PC-9 (cell line): ENCODE measurements at regions of chr1 and their contacts with region 1.

Region 1: GRCh38 chr1:225508538-225509375 is 80.9 kb upstream of the LBR start:
- DNase-seq: peak; percentile 65 to 98
- H3K4me3 ChIP-seq: no peak overlapping the region
- H3K27ac ChIP-seq: peak overlapping the region; percentile 93
- H3K4me1 ChIP-seq: peaks cover 36% of the 10 kb centered on the region
- H3K27me3 ChIP-seq: no peaks in the 10 kb centered on the region
- CTCF ChIP-seq: no peak

Region 2: DNA sequence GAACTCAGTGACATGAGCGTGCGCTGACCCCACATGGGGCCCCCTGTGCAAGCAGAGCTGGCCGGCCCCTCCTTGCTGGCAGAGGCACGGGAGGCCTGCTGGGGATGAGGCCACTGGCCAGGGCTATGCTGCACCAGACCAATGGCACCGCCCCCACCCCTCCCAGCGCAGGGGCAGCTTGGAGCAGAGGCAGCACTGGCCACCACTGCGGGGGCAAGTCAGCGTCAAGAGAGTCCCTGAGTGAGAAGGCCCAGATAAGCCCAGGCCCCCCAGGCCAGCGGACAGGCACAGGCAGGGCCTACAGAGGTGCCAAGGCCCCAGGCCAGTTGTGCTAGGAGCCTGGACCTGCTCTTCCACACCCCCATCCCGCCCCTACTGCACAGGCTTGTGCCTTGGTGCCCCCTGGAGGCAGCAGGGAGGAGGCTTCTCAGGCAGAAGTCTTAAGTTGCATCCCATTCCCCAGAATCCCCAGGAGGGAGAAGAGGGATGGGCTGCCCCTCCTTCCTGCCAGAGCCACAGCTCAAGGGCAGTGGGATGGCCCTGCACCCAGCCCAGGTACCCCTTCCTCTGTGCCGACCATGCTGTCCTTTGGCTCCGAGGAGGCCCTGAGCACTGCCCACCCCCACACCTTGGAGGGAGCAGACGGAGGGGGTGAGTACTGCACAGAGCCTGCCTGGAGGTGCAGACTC is 337.0 kb after region 1 on chr1:
- CTCF ChIA-PET with region 1: no interaction called
- POLR2A ChIA-PET with region 1: interaction called, 11 read pairs
- intact Hi-C with region 1: no loop called
- DNase-seq: peak; percentile 68 to 80
- H3K4me3 ChIP-seq: no peak overlapping the region
- H3K27ac ChIP-seq: no peak overlapping the region
- H3K4me1 ChIP-seq: no peaks in the 10 kb centered on the region
- H3K27me3 ChIP-seq: no peaks in the 10 kb centered on the region
- CTCF ChIP-seq: peak; percentile 81